Psoas muscle (tissue), 8 donors: ENCODE measurements at regions of chr19 and their contacts with region 1.

Region 1: DNA sequence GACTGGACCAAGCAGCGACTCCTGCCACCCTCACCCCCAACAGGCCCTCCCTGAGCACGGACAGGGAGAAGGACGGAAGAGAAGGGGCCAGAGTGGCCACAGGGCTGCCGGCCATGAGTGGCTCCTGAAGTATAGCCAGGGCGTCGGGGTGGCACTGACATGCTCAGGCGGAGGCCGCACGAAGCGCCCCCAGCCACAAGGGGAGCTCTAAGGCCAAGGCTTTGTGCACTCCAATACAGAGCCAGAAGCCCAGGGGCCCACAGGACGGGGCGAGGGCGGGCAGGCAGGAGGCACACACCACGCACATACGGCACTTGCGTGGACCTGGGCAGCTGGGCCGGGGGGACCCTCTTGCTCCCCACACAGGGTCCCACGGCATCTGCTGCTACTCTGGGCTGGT is 52.0 kb downstream of the KLF2 start:
- DNase-seq: peak in 1 of 2 donors; percentile 57
- ATAC-seq: peak in 3 of 4 donors; percentile 24 to 34 (median 29)
- H3K4me3 ChIP-seq: no peak overlapping the region
- H3K27ac ChIP-seq: peak overlapping the region; percentile 48
- H3K4me1 ChIP-seq: peaks cover 15% of the 10 kb centered on the region
- H3K27me3 ChIP-seq: no peaks in the 10 kb centered on the region
- CTCF ChIP-seq: peak; percentile 27

Region 2: GRCh38 chr19:16283210-16284061 is 93.2 kb before region 1 on chr19:
- intact Hi-C with region 1: no loop called
- DNase-seq: peak; percentile 83 to 84
- ATAC-seq: peak; percentile 65 to 79 (median 74)
- H3K4me3 ChIP-seq: peak overlapping the region; percentile 44
- H3K27ac ChIP-seq: peak overlapping the region; percentile 89
- H3K4me1 ChIP-seq: peaks cover 51% of the 10 kb centered on the region
- H3K27me3 ChIP-seq: no peaks in the 10 kb centered on the region
- CTCF ChIP-seq: no peak

Region 3: DNA sequence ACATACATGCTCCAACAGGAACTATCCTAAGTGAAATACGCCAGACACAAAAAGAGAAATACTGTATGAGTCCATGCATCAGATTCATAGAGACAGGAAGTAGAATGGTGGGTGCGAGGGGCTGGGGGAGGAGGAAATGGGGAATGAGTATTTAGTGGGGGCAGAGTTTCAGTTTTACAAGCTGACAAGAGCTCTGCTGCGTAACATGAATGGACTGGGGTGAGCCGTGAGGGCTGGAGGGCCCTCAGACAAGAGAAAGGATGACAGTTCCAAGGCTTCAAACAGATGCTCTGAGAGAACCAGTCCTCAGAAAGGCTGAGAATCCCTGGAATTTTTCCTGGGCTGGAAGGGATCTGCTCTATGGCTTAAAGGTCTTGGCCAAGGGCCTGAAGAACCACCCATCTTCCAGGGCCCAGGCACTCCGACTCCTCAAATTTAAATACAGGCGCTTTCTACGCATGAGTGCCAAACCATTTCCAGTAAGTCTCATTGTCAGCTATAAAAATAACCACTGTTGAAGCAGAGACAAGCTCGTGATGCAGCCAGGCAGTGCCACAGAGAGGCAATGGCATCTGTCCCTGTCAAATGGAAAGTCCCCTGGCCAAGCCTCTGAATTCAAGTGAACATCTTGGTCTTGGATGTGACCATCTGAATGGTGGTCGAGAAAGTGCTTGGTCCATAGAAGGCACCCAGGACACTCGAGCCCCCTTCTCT is 34.5 kb before region 1 on chr19:
- intact Hi-C with region 1: loop called in 1 of 2 experiments (anchors 5 kb)
- DNase-seq: peak in 1 of 2 donors; percentile 37
- ATAC-seq: peak; percentile 83 to 89 (median 86)
- H3K4me3 ChIP-seq: no peak overlapping the region
- H3K27ac ChIP-seq: peak overlapping the region; percentile 87
- H3K4me1 ChIP-seq: peaks cover 43% of the 10 kb centered on the region
- H3K27me3 ChIP-seq: no peaks in the 10 kb centered on the region
- CTCF ChIP-seq: no peak

Region 4: GRCh38 chr19:16457195-16457953 is 80.7 kb after region 1 on chr19:
- intact Hi-C with region 1: no loop called
- DNase-seq: peak; percentile 49 to 76
- ATAC-seq: peak; percentile 15 to 42 (median 30)
- H3K4me3 ChIP-seq: peak overlapping the region; percentile 44
- H3K27ac ChIP-seq: peak overlapping the region; percentile 94
- H3K4me1 ChIP-seq: peaks cover 93% of the 10 kb centered on the region
- H3K27me3 ChIP-seq: no peaks in the 10 kb centered on the region
- CTCF ChIP-seq: no peak